AG04450 (cell line): ENCODE measurements at regions of chr1 and their contacts with region 1.

Region 1: GRCh38 chr1:172719694-172720138 is 60.8 kb downstream of the FASLG start:
- DNase-seq: no peak
- H3K4me3 ChIP-seq: no peak overlapping the region
- H3K27ac ChIP-seq: no peak overlapping the region
- H3K27me3 ChIP-seq: no peaks in the 10 kb centered on the region
- CTCF ChIP-seq: peak; percentile 79

Region 2: GRCh38 chr1:172443626-172444453 is 275.9 kb before region 1 on chr1 and contains the start of gene PIGC:
- CTCF ChIA-PET with region 1: interaction called, 66 read pairs
- POLR2A ChIA-PET with region 1: no interaction called
- DNase-seq: peak; percentile 60
- H3K4me3 ChIP-seq: peak within 1 kb of the TSS; percentile 90
- H3K27ac ChIP-seq: peak within 1 kb of the TSS; percentile 75
- H3K27me3 ChIP-seq: peaks cover 2% of the 10 kb centered on the region
- CTCF ChIP-seq: peak; percentile 87
- polyA plus RNA-seq, gene PIGC: 22.7 and 25.2 TPM in 2 replicates

Region 3: DNA sequence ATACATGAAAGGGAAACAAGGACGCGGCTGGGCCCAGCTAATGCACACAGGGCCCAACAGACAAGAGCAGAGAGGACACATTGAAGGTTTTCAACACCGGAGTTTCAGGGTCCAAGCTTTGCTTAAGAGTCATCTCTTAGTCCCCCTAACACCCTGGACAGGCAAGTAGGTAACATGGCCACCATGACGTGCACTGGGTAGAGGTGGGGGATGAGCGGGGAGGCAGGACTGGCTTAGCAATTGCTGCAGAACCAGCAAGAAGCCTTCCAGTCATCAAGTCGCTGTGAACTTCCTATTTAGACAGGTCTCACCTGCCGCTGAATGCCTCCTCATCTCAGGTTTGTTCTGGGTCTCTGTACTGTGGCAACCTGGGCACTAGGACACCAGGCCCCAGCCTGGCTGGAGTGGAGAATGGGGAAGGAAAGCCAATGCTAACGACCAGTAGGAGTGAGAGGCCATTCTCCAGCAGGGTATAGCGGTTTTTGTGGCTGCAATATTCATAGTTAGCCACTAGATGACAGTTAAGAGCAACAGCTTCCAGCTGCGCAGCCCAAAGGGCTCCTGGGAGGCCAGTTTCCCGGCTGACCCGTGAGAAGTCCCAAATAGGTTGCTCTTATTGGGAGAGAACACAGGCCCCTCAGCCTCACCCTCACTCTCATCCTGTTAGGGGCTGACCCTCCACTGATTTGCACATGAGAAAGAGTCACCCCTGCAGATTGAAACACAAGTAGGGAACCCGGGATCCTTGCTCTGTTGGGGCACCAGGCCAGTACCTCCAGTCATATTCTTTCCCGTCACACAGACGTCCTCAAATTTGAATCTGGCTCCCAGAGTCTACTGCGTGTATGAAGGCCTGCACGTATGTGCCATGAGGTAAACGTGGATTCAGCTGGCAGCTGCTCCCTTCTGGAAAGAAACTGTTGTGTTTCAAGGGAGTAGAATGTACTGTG is 269.9 kb before region 1 on chr1:
- CTCF ChIA-PET with region 1: interaction called, 66 read pairs
- POLR2A ChIA-PET with region 1: no interaction called
- DNase-seq: peak; percentile 4
- H3K4me3 ChIP-seq: no peak overlapping the region
- H3K27ac ChIP-seq: no peak overlapping the region
- H3K27me3 ChIP-seq: peaks cover 4% of the 10 kb centered on the region
- CTCF ChIP-seq: peak; percentile 92

Region 4: GRCh38 chr1:172532700-172533509 is 186.8 kb before region 1 on chr1 and contains the start of gene SUCO:
- CTCF ChIA-PET with region 1: interaction called, 10 read pairs
- POLR2A ChIA-PET with region 1: interaction called, 4 read pairs
- DNase-seq: peak; percentile 99
- H3K4me3 ChIP-seq: peak within 1 kb of the TSS; percentile 89
- H3K27ac ChIP-seq: peak within 1 kb of the TSS; percentile 91
- H3K27me3 ChIP-seq: peaks cover 11% of the 10 kb centered on the region
- CTCF ChIP-seq: peak; percentile 17; the same call in 1 of the 2 replicates
- polyA plus RNA-seq, gene SUCO: 17.6 and 25.1 TPM in 2 replicates